CD4-positive, alpha-beta T cell (primary cell): ENCODE measurements at regions of chr6 and their contacts with region 1.

Region 1: GRCh38 chr6:170087941-170088581 is 202.8 kb downstream of the DLL1 start:
- DNase-seq: peak in 12 of 14 experiments; percentile 21 to 88 (median 52)
- ATAC-seq: peak; percentile 66
- H3K4me3 ChIP-seq: peak overlapping the region; percentile 71
- H3K4me3 Mint-ChIP-seq: peak overlapping the region; percentile 81
- H3K27ac ChIP-seq: peak overlapping the region; percentile 62 to 73
- H3K27ac Mint-ChIP-seq: peak overlapping the region; percentile 78
- H3K4me1 ChIP-seq: peaks cover 40% of the 10 kb centered on the region
- H3K4me1 Mint-ChIP-seq: peaks cover 40% of the 10 kb centered on the region
- H3K27me3 ChIP-seq: no peaks in the 10 kb centered on the region
- H3K27me3 Mint-ChIP-seq: no peaks in the 10 kb centered on the region
- CTCF ChIP-seq: no peak

Region 2: GRCh38 chr6:170147832-170148708 is 60.0 kb after region 1 on chr6:
- CTCF ChIA-PET with region 1: no interaction called
- POLR2A ChIA-PET with region 1: interaction called, 18 read pairs
- intact Hi-C with region 1: no loop called
- DNase-seq: peak in 13 of 14 experiments; percentile 10 to 77 (median 47)
- ATAC-seq: peak; percentile 71
- H3K4me3 ChIP-seq: peak overlapping the region; percentile 43
- H3K4me3 Mint-ChIP-seq: peak overlapping the region; percentile 81
- H3K27ac ChIP-seq: peak overlapping the region in 1 of 2 donors; percentile 58
- H3K27ac Mint-ChIP-seq: peak overlapping the region; percentile 51
- H3K4me1 ChIP-seq: peaks cover 60% of the 10 kb centered on the region
- H3K4me1 Mint-ChIP-seq: peaks cover 48% of the 10 kb centered on the region
- H3K27me3 ChIP-seq: peaks cover 0 to 5% of the 10 kb centered on the region in 2 experiments
- H3K27me3 Mint-ChIP-seq: peaks cover 14% of the 10 kb centered on the region
- CTCF ChIP-seq: no peak

Region 3: DNA sequence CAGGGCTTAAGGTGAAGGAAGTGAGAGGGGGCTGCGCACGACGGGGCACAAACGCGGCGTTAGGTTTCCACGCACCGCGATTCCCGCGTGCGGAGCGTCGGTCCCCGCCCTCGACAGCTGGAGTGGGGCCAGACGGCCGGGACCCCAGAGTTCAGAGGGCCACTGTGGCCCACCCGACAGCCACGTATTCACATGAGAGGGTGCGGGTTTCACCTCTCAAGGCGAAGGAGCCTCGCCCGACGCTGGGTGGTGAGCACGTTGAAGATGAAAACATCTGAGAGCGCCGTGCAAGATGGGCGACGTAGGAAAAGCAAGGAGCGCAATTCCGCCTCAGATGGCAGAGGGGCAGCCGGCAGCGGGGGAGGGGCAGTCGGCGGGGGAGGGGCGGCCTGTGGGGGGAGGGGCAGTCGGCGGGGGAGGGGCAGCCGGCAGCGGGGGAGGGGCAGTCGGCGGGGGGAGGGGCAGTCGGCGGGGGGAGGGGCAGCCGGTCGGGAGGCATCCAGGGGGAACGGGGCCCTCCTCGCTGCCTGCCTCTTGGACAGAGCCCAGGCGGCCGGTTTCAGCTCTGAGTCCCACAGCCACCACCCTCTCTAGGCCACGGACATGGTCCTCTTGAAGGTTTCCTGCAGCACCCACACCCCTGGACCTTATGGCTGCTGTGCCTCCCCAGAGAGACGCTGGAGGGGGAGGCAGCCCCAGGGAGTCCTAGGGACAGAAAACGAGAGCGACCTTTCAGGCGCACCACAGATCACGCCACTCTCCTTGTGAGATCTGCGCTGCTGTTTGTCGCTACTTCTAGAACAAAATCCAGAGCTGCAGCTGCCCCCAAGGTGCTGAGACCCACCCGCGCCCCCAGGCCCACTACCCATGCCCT is 89.1 kb after region 1 on chr6:
- CTCF ChIA-PET with region 1: no interaction called
- POLR2A ChIA-PET with region 1: no interaction called
- intact Hi-C with region 1: no loop called
- DNase-seq: peak in 2 of 14 experiments; percentile 2 to 45
- ATAC-seq: no peak
- H3K4me3 ChIP-seq: no peak overlapping the region
- H3K4me3 Mint-ChIP-seq: no peak overlapping the region
- H3K27ac ChIP-seq: no peak overlapping the region
- H3K27ac Mint-ChIP-seq: no peak overlapping the region
- H3K4me1 ChIP-seq: peaks cover 2% of the 10 kb centered on the region
- H3K4me1 Mint-ChIP-seq: no peaks in the 10 kb centered on the region
- H3K27me3 ChIP-seq: peaks cover 3 to 6% of the 10 kb centered on the region in 2 experiments
- H3K27me3 Mint-ChIP-seq: peaks cover 4% of the 10 kb centered on the region
- CTCF ChIP-seq: no peak

Region 4: GRCh38 chr6:170271771-170272314 is 183.8 kb after region 1 on chr6:
- CTCF ChIA-PET with region 1: no interaction called
- POLR2A ChIA-PET with region 1: interaction called, 16 read pairs
- intact Hi-C with region 1: no loop called
- DNase-seq: peak; percentile 38 to 92 (median 72)
- ATAC-seq: peak; percentile 88
- H3K4me3 ChIP-seq: peak overlapping the region; percentile 56
- H3K4me3 Mint-ChIP-seq: peak overlapping the region; percentile 86
- H3K27ac ChIP-seq: peak overlapping the region; percentile 29 to 65
- H3K27ac Mint-ChIP-seq: peak overlapping the region; percentile 92
- H3K4me1 ChIP-seq: peaks cover 30% of the 10 kb centered on the region
- H3K4me1 Mint-ChIP-seq: peaks cover 22% of the 10 kb centered on the region
- H3K27me3 ChIP-seq: peaks cover 0 to 2% of the 10 kb centered on the region in 2 experiments
- H3K27me3 Mint-ChIP-seq: no peaks in the 10 kb centered on the region
- CTCF ChIP-seq: no peak